K562 (cell line): ENCODE measurements at regions of chr2 and their contacts with region 1.

Region 1: DNA sequence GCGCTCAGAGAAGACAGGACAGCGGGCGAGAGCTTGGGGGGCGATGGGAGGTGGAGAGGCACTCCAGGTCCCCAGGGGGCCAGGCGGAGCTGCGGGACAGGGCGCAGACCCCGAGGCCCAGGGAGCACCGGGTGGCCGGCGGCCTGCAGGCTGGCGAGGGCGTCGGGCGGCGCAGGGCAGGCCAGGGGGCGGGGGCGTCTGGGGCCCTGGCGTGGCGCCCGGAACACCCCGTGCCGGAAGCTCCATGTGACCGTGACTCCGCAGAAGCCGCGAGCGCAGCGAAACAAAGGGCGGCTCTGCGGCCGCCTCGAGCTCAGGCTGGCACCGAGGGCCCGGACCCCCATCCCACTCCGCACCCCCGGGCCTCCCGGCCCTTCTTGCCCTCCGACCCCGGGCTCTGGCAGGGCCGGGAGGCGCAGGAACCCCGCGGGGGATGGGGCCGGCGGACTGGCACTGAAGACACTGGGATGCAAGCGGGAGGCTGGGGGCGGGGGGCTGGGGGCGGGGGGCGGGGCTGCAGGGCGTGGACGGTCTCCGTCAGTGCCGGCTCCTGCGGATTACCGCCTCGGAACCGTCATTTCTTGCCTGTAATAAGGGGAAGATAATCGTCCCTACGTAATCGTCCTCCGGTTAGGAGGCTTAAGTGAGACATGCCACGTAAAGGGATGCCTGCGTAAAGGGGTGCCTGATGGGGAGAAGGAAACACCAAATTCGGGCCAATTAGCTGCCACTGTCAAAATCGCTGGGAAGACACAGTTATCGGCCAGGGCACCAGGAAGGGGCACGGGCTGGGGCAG is 19.2 kb downstream of the SH2D6 start:
- DNase-seq: peak; percentile 84 to 86 (median 86)
- ATAC-seq: peak; percentile 81
- H3K4me3 ChIP-seq: peak overlapping the region; percentile 32
- H3K27ac ChIP-seq: peak overlapping the region; percentile 79
- H3K4me1 ChIP-seq: peaks cover 28 to 52% of the 10 kb centered on the region in 2 experiments
- H3K27me3 ChIP-seq: no peaks in the 10 kb centered on the region
- CTCF ChIP-seq: no peak
- EP300 ChIP-seq: no peak; the same call in 1 of the 2 replicates
- POLR2A ChIP-seq: peak; percentile 42; the same call in 1 of the 2 replicates
- RAD21 ChIP-seq: no peak

Region 2: DNA sequence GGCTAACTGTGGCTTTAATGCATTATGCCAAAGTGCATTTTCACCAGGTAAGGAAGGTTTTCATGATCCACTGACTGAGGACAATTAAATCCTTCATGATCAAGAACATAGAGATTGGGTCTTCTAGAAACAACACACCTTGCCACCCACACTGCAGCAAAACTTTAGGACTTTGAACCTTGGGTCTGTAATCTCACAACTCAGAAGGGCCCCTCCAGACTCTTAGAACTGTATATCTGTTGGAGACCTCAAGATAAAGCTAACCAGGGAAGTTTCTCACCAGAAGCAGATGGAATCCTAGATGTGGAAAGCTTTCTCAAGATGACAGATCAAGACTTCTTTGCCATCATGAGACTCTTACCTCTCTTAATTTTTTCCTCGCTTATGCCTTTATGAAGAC is 58.8 kb after region 1 on chr2:
- CTCF ChIA-PET with region 1: no interaction called
- POLR2A ChIA-PET with region 1: interaction called, 4 read pairs
- in situ Hi-C with region 1: no loop called
- intact Hi-C with region 1: loop called (anchors 5 kb)
- DNase-seq: peak in 1 of 4 experiments; percentile 61
- ATAC-seq: peak; percentile 11
- H3K4me3 ChIP-seq: no peak overlapping the region
- H3K27ac ChIP-seq: peak overlapping the region; percentile 60
- H3K4me1 ChIP-seq: peaks cover 15 to 49% of the 10 kb centered on the region in 2 experiments
- H3K27me3 ChIP-seq: no peaks in the 10 kb centered on the region
- CTCF ChIP-seq: no peak
- EP300 ChIP-seq: peak; percentile 51; the same call in 1 of the 2 replicates
- POLR2A ChIP-seq: no peak
- RAD21 ChIP-seq: no peak

Region 3: DNA sequence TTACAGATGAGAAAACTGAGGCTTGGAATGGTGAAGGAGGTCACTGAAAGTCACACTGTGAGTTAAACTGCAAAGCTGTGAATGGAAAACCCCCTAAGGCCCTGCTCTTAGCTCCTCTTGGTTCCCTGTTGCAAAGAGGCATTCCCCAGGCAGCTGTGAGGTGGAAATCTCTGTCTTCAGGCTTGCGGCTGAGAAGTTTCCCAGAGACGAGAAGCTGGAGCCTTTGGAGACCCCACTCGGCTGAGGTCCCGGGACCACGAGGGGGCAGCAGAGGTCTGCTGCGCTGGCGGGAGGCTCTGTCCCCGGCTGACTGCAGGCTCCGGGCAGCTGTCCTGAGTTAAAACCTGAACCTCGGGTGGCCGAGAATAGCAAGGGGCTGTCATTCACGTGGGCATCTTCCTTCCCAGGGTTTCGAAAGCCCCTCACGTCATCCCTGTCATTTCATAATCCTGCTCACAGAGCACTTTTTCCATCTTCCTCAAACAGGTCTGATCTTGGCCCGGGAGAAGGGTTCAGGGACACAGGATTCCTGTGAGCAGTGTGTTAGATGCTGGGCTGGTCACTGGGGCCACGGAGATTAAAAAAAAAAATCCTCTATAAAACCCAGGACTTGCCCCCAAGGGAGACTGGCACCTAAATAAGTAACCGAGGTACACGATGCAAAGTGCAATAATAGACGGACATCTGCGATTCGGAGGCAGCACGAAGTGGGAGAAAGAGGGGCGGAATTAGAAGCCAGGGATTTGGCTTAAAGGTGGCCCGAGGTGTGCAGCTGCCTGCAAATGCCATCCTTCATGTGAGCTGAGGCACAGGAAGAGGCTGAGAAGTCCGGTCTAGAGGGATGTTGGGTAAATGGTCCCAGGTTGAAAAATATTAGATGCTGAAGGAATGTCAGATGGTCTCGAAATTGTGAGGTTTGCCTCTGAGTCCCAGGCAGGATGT is 291.5 kb after region 1 on chr2:
- CTCF ChIA-PET with region 1: no interaction called
- POLR2A ChIA-PET with region 1: no interaction called
- in situ Hi-C with region 1: no loop called
- intact Hi-C with region 1: no loop called
- DNase-seq: peak; percentile 84 to 89 (median 86)
- ATAC-seq: peak; percentile 100
- H3K4me3 ChIP-seq: no peak overlapping the region
- H3K27ac ChIP-seq: no peak overlapping the region
- H3K4me1 ChIP-seq: peaks cover 0 to 4% of the 10 kb centered on the region in 2 experiments; a peak in 2 of 5 replicates
- H3K27me3 ChIP-seq: peaks cover 18 to 60% of the 10 kb centered on the region in 2 experiments
- CTCF ChIP-seq: peak; percentile 95 to 96 (median 95)
- EP300 ChIP-seq: no peak
- POLR2A ChIP-seq: no peak
- RAD21 ChIP-seq: peak; percentile 88 to 94